AG04449 (cell line): ENCODE measurements at regions of chr10 and their contacts with region 1.

Region 1: GRCh38 chr10:26733750-26734568 is 36.5 kb downstream of the PDSS1 start:
- DNase-seq: no peak
- H3K4me3 ChIP-seq: no peak overlapping the region
- CTCF ChIP-seq: no peak

Region 2: GRCh38 chr10:26372513-26373354 is 361.2 kb before region 1 on chr10:
- CTCF ChIA-PET with region 1: no interaction called
- POLR2A ChIA-PET with region 1: no interaction called
- DNase-seq: no peak
- H3K4me3 ChIP-seq: no peak overlapping the region
- CTCF ChIP-seq: no peak

Region 3: GRCh38 chr10:26755443-26755903 is 21.5 kb after region 1 on chr10:
- CTCF ChIA-PET with region 1: no interaction called
- POLR2A ChIA-PET with region 1: no interaction called
- DNase-seq: no peak
- H3K4me3 ChIP-seq: no peak overlapping the region
- CTCF ChIP-seq: no peak

Region 4: DNA sequence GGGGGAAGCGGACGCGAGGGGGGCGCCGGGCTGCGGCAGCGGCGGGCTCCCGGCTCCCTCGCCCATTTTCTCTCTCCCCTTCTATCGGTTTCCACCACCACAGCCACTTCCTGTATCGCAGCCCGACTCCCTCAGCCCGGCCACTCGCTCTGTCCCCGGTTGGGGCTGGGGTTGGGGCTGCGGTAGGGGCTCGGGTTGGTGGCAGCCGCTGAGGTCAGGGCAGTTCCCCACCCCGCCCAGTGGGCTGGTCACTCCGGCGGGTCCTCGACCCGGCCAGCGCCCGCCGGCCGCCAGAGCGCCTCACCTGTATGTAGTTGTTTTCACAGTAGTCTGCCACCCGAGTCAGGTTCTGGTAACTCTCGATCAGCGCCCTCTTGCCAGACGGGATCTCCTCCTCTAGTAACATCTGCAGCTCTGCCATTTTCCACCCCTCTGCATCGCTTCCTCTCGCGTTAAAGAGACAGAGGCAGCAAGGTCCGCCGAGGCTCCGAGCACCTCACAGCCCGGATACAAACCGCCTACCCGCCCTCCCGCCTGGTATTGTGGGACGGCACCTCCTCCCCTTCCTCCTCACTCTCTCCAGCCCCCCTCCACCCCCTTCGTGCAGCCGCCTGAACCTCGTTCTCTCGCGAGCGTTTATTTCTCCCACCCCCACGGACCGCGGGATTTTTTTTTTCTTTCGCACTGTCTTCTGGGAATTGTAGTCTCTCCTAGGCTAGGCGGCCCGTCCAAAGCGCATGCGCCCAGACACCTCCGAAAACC is 126.7 kb after region 1 on chr10 and contains the start of gene ABI1:
- CTCF ChIA-PET with region 1: interaction called, 10 read pairs
- POLR2A ChIA-PET with region 1: no interaction called
- DNase-seq: peak; percentile 92
- H3K4me3 ChIP-seq: peak within 1 kb of the TSS; percentile 85
- CTCF ChIP-seq: no peak